Dendritic cell treated with granulocyte-macrophage colony-stimulating factor and Interleukin-4, amounts not matched to agents 40 ng/mL and 50 ng/mL, for 4 days (primary cell): ENCODE measurements at regions of chr18 and their contacts with region 1.

Region 1: DNA sequence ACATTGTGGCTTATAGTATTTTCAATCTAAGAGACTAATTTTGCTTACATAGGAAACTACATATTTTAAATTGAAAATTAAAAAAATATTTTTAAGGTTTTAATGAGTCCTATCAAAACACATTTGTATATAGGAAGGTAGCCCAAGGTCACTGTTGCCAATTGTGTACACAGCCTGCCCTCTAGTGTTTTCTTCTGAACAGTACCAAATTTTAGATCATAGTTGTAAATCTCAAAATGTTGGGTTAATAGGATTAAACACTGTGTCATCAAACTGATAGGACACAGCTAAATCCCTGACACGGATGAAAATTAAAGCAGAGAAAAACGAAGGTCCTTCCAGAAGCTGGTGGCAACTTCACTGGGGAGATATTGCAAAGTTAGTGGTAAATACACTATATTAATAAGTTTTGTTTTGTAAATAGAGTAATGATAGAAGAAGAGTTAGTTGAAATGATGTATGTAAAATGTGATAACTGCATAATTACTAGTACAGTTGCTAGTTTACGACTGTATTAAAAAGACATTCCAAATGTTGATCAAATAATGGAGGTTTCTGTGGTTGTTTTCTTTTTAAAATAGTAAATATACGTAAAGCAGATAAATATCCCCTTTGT is 19.7 kb downstream of the CLUL1 start:
- H3K4me3 Mint-ChIP-seq: no peak overlapping the region
- H3K27ac Mint-ChIP-seq: no peak overlapping the region
- H3K4me1 Mint-ChIP-seq: peaks cover 34% of the 10 kb centered on the region
- H3K27me3 Mint-ChIP-seq: peaks cover 15% of the 10 kb centered on the region

Region 2: DNA sequence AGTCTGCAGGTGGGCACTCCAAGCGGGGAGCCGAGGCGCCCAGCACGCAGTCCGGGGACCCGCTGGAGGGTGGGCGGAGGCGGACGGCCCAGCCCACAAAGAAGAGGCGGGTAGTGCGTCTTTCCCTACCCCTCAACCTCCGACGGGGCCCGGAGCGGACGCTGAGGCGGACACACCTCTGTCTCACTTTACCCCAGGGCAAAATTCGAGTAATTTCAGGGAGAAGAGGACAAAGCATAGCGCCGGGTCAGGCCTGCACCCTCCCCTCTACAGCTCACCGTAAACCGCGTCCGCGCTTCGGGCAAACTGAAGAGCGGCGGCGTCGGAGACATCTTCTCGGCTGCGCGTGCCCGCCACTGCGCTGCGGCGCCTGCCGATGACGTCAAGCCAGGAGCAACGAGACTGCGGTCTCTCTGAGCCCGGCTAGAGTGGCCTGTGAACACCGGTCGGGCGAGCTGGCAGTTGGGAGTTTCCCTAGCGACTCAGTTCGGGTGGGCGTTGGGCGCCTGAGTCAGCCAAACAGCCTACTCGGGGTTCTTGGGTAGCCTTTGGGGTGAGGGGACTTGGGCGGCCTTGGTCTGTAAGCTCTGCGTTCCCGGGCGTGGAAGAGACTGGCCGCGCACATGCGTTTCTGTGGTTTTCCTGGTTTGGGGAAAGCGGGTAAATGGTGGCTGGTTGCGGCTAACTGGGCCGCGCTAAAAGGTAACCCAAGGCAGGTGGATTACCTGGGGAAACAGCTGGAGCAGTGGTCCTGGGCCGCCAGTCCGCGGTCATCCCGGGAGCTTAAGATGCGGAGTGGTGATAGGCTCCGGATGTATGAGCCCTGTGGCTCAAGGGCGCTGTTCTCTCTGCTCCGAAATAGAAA is 348.6 kb before region 1 on chr18 and contains the start of gene THOC1:
- intact Hi-C with region 1: loop called (anchors 1 kb)
- H3K4me3 Mint-ChIP-seq: peak within 1 kb of the TSS; percentile 99
- H3K27ac Mint-ChIP-seq: peak within 1 kb of the TSS; percentile 100
- H3K4me1 Mint-ChIP-seq: peaks cover 38% of the 10 kb centered on the region
- H3K27me3 Mint-ChIP-seq: no peaks in the 10 kb centered on the region

Region 3: DNA sequence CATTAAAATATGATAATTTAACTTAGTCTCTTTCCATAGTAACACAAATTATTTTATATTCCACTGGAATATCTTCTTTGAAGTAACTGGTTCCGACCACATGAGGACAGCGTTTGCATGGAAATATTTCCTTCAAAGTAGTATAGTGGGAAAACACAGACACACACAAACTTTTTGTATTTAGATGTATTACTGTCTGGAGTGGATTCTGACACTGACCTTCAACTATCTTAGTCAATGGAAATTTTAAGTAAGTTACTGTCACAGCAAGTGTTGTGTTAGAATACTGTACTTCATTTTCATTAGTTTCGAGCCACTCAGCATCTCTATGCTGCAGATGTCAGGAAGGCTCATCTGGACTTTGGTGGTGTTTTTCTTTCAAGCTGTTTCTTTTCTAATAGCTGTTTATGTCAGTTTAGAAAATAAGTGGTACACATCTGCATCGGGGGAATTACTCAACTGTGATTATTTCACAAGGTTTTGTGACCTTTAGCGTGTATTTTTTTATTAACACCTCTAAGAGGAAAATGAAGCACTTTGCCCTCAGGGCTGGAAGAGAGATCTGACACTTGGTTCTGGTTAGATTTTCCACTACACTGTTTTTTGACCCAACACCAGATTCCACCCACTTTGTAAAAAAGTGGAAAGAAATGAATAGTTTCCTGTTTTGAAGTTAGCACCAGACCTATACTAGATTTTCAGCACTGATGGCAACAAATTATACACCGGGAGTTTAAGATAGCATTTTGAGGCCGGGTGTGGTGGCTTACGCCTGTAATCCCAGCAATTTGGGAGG is 329.8 kb before region 1 on chr18:
- intact Hi-C with region 1: loop called (anchors 1 kb)
- H3K4me3 Mint-ChIP-seq: no peak overlapping the region
- H3K27ac Mint-ChIP-seq: no peak overlapping the region
- H3K4me1 Mint-ChIP-seq: peaks cover 40% of the 10 kb centered on the region
- H3K27me3 Mint-ChIP-seq: no peaks in the 10 kb centered on the region

Region 4: DNA sequence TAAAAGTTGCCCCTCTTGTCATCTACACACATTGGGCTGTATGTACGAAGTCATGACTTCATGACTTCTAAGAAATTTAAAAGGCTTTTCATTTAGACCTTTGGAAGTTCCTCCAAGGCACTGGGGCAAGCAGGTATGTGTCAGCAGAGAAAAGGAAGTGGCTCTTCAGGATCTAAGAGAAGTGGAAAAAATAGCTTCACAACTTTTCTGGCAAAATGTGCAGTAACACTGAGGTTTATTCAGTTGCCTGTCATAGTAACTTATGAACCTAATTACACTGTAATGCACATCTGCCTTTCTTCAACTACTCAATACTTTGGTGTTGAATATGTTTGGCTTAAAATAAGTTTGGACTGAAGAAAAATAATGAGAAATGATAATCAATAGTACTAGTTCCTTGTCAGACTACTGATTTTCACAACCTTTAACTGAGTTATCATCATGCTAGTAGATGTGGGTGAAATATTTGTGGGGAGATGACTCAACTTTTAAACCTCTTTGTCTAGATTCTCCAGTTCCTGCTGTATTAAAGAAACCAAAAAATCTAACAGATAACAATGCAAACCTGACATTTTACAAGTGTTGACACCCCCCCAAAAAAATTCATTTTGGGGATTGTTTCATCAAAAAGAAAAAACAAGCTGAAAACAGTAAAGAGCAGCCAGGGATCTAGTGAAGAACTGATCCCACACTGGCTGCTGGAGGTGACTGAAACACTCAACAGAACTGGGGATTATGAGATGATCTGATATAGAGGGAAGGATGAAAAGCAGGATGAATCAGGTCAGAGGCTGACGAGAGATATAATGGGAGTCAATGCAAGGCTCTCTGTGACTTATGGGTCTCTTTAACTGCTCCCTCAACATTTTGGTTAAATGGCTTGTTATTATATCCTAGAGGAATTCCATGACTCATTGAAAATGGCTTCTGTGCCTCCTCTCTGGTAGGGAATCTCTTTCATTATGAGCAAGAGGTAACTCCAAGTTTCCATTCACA is 200.6 kb before region 1 on chr18:
- intact Hi-C with region 1: loop called (anchors 10 kb)
- H3K4me3 Mint-ChIP-seq: no peak overlapping the region
- H3K27ac Mint-ChIP-seq: peak overlapping the region; percentile 41
- H3K4me1 Mint-ChIP-seq: peaks cover 49% of the 10 kb centered on the region
- H3K27me3 Mint-ChIP-seq: no peaks in the 10 kb centered on the region

Region 5: DNA sequence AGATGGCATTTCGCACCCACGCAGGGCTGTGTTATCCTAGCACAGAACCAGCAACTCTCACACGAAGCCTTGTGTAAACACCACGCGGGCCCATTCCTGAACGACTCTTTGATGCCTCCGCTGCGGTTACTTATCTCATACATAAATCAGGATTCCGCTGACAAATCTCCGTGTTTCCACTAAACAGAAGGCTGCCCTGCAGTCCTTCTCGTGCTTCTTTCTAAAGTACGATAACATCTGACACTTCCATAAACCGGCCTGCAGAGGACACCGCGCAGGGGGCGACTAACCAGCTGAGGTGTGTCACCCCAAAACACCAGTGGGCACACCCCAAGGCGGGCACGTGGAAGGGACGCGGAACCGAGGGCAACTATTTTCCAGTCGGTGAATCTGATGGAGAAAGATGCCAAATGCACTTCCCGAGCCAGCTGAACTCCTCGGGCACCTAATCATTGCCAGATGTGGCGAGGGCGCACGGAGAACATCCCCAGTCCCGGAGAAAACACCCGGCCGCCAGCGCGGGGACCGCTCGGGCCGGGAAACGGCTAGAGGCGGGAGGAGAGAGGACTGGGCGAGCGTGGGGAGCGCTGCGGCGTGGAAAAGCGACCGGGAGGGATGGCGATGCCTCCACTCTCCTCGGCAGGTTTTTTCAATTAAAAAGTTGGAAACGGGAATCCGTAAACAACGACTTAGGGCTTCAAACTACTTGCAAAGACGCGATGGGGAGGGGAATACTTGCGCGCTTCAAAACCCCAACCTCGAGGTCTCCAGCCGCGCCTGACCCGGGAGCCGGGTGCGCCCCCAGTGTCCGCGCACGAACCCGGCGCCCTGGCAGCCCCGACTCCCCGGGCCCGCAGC is 116.7 kb before region 1 on chr18:
- intact Hi-C with region 1: loop called (anchors 5 kb)
- H3K4me3 Mint-ChIP-seq: peak overlapping the region; percentile 86
- H3K27ac Mint-ChIP-seq: peak overlapping the region; percentile 66
- H3K4me1 Mint-ChIP-seq: peaks cover 32% of the 10 kb centered on the region
- H3K27me3 Mint-ChIP-seq: peaks cover 62% of the 10 kb centered on the region

Region 6: DNA sequence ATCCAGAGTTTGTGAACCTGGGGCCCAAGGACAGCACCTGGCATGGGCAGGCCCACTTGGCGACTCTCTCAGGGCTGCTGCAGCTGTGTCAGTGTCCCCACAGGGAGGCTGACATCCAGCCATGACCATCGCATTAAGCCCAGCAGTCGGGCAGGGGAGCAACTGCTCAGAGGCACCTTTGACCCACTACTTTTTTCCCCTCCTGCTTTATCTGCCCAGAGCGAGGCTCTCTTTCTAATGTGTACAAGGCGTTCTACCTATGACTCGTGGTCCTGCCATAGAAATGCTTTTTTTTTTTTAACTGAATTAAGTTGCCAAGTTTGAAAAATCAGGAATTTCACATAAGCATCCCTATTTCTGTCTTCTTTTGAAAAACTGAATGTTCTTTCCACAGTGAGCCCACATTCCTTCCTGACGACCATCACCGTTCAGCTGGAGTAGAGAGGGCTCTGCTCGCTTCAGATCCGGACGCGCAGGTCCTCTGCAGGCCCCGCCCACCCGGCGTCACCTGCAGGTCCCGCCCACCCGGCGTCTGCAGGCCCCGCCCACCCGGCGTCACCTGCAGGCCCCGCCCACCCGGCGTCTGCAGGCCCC is 20.1 kb before region 1 on chr18:
- intact Hi-C with region 1: loop called (anchors 1 kb)
- H3K4me3 Mint-ChIP-seq: no peak overlapping the region
- H3K27ac Mint-ChIP-seq: no peak overlapping the region
- H3K4me1 Mint-ChIP-seq: peaks cover 7% of the 10 kb centered on the region
- H3K27me3 Mint-ChIP-seq: peaks cover 40% of the 10 kb centered on the region